Activated CD4-positive, alpha-beta memory T cell treated with anti-CD3 and anti-CD28 coated beads for 36 hours (primary cell): ENCODE measurements at regions of chr15 and their contacts with region 1.

Region 1: DNA sequence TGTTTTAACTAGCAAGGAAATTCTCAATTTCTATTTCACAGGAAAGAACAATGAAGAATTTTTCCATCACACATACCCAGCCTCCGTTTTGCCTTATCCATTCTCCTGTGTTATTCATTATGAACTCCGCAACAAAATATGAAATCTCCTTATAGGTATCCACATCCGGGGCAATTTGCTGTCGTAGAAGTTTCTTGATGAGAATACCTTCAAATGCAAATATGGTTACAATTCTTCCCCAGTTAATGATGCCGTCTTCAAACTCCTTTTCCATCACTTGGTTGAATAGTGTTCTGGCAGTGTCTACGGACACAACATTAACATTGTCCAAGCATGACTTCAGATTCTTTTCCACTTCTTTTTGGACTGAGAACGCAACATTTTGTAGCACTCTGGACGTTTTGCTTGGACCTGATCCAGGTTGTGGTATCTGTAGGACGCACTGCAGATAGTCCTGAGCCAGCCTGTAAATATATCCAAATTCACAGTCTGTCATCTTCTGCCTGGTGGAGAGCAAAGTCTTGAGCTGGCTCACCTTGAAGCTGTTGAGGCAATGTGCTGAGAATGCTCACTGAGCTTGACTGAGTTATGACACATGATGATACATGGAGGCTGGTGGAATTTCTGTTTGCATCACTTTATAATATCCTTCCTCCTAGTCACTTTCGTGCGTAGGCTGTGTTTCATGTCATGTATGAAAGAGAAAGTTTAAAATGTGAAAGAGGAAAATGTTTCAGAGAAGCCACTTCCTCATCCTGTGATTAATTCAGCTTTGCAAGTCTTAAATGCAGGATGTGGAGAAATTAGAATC is at the start of gene BCL2A1:
- DNase-seq: peak; percentile 88
- H3K4me3 Mint-ChIP-seq: peak within 1 kb of the TSS; percentile 96
- H3K27ac Mint-ChIP-seq: peak within 1 kb of the TSS; percentile 99
- H3K4me1 Mint-ChIP-seq: peaks cover 49% of the 10 kb centered on the region
- H3K27me3 Mint-ChIP-seq: no peaks in the 10 kb centered on the region
- total RNA-seq, gene BCL2A1: 110 to 111 TPM

Region 2: DNA sequence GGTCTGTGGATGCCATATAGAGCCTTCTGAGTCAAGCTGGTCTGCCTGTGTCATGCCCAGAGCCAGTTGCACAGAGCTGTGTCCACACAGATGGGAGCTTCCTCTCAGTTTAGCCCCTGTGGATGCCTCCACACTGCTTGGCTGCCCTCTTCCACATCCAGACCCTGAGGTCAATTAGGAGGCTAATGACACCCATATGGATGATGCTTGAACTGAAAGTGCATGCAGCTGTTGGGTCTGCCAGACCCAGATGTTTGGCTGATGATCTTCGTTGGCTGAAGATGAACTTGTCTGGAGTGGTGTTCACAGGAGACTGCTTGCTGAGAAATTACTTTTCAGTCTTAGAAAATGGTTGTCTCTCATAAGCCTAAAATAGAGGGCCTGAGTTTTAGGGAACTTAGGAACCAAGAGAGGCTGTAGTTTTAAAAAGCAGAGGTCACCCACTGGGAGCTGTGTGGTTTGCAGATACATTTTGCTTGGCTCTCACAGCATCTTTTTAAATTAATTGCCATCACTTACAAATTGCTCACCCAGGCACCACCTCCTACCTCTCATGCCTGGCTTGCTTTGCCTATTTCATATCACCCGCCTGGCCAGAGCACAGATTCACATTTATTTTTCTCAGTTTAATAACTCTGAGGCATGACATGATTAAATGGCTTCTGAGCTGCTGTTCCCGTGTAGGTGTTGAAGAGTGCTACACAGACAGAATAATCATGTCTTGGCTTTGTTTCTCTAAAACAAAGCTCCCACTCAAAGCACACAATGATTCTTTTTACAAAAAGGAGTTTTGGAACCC is 362.6 kb before region 1 on chr15:
- CTCF ChIA-PET with region 1: no interaction called
- POLR2A ChIA-PET with region 1: no interaction called
- intact Hi-C with region 1: no loop called
- DNase-seq: no peak
- H3K4me3 Mint-ChIP-seq: no peak overlapping the region
- H3K27ac Mint-ChIP-seq: no peak overlapping the region
- H3K4me1 Mint-ChIP-seq: no peaks in the 10 kb centered on the region
- H3K27me3 Mint-ChIP-seq: peaks cover 3% of the 10 kb centered on the region

Region 3: DNA sequence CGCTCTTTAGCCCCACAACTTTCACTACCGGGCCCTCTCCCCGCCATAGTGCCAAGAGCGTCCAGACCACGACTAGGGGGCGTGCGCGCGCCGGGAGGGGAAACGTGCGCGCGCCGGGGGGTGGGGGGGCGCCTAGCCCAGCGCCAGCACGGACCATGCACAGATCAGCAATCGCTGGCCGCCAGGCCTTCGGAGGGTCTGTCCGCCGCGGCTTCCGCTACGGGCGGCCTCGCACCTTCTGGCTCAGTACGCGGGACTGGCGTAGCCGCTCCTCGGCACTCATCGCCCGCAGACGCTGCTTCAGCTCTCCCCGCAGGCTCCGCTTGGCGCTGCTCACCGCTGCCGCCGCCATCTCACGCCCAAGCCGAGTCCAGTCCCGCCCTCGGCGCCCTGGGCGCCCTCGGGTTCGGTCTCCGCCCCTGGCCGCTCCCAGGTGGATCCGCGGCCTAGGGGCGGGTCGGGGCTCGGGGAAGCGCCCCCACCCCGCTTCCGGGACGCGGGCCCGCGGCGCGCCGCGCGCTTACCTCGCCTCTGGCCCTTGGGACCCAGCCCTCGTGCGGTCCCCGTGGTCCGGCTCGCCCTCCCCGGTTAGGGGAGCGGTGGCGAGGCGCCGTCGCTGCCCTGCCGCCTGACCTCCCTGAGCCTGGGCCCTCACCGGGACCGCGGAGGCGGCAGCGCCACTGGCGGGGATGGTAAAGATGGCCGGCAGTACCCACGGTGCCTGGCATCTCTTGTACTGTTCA is 74.0 kb before region 1 on chr15 and contains the start of gene MTHFS:
- CTCF ChIA-PET with region 1: interaction called, 13 read pairs
- POLR2A ChIA-PET with region 1: interaction called, 126 read pairs
- intact Hi-C with region 1: loop called (anchors 1 kb)
- DNase-seq: peak; percentile 83
- H3K4me3 Mint-ChIP-seq: peak within 1 kb of the TSS; percentile 97
- H3K27ac Mint-ChIP-seq: peak within 1 kb of the TSS; percentile 99
- H3K4me1 Mint-ChIP-seq: peaks cover 45% of the 10 kb centered on the region
- H3K27me3 Mint-ChIP-seq: no peaks in the 10 kb centered on the region
- total RNA-seq, gene MTHFS: 46.2 to 49.4 TPM

Region 4: DNA sequence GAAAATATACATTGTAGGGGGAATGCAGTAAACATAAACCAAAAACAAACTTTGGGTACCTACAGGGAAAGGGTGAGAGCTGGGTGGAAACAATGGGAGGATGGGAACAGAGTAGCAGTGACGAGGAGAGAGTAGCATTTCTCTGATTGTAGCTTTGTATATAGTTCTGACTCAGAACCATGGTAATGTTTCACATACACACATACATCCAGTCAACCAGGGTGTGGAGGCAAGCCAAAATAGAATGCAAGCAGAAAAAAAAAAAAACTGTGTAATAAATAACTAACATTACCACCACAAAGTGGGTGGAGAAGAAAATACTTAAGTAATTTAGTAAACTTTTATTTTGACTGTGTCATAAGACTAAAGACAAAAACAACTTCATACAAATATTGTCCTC is 27.0 kb before region 1 on chr15:
- CTCF ChIA-PET with region 1: interaction called, 4 read pairs
- POLR2A ChIA-PET with region 1: interaction called, 29 read pairs
- intact Hi-C with region 1: loop called (anchors 1 kb)
- DNase-seq: no peak
- H3K4me3 Mint-ChIP-seq: no peak overlapping the region
- H3K27ac Mint-ChIP-seq: peak overlapping the region; percentile 35
- H3K4me1 Mint-ChIP-seq: peaks cover 23% of the 10 kb centered on the region
- H3K27me3 Mint-ChIP-seq: no peaks in the 10 kb centered on the region

Region 5: DNA sequence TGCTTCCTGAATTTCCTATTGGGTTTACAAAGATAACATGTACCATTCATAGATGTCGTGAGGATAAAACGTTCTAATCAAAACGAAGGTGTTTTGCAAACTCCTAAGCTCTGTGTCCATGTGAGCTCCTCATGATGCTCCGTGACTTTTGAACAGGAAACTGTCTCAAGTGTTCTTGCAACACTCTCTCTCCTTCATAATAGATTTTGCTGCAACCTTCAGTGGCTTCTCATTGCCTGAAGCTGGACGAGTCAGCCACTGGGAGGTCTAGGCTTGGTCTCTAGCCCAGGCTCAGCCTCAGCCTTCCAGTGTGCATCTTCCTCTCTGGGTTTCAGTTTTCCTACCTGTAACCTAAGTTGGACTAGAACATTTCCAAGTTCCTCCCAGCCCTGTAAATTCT is 18.9 kb after region 1 on chr15:
- CTCF ChIA-PET with region 1: interaction called, 6 read pairs
- POLR2A ChIA-PET with region 1: no interaction called
- intact Hi-C with region 1: loop called (anchors 1 kb)
- DNase-seq: no peak
- H3K4me3 Mint-ChIP-seq: no peak overlapping the region
- H3K27ac Mint-ChIP-seq: no peak overlapping the region
- H3K4me1 Mint-ChIP-seq: peaks cover 3% of the 10 kb centered on the region
- H3K27me3 Mint-ChIP-seq: no peaks in the 10 kb centered on the region

Region 6: GRCh38 chr15:80058851-80059785 is 88.3 kb after region 1 on chr15 and contains the start of gene ZFAND6:
- CTCF ChIA-PET with region 1: interaction called, 3 read pairs
- POLR2A ChIA-PET with region 1: interaction called, 30 read pairs
- intact Hi-C with region 1: loop called (anchors 2 kb)
- DNase-seq: peak; percentile 97
- H3K4me3 Mint-ChIP-seq: peak within 1 kb of the TSS; percentile 81
- H3K27ac Mint-ChIP-seq: peak within 1 kb of the TSS; percentile 90
- H3K4me1 Mint-ChIP-seq: peaks cover 35% of the 10 kb centered on the region
- H3K27me3 Mint-ChIP-seq: no peaks in the 10 kb centered on the region
- total RNA-seq, gene ZFAND6: 32.2 to 33.4 TPM